Activated CD4-positive, alpha-beta T cell treated with anti-CD3 and anti-CD28 coated beads for 36 hours (primary cell): ENCODE measurements at regions of chr11 and their contacts with region 1.

Region 1: DNA sequence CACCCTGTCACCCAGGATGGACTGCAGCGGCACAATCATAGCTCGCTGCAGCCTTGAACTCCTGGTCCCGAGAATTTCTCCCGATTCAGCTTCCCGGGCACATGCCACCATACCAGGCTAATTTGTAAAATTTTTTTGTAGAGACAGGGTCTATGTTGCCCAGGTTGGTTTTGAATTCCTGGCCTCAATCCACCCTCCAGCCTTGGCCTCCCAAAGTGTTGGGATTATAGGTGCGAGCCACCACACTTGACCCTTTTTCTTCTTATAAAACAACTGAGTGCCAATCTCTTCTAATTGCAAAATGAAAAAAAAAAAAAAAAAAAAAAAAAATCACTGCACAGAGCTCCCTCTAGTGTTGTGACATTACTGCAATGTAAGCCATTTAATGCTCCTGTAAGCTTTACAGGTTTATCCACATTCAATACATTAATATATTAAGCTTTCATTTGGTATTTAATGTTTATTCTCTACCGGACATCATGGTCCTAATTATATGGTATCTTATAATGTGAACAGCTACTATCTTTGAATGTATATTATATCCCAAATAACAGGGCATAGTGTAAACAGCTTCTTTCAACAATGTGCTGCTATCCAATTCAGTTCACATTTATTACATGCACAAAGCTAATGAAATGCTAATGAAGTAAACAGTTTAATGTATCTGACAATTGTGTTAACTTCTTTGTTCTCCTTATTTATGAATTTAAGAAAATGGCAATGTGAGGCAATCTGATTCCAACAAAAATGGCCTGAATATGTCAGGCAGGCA is 44.6 kb downstream of the COPB1 start:
- DNase-seq: no peak
- ATAC-seq: peak; percentile 39
- H3K4me3 Mint-ChIP-seq: no peak overlapping the region
- H3K27ac Mint-ChIP-seq: no peak overlapping the region
- H3K4me1 Mint-ChIP-seq: no peaks in the 10 kb centered on the region
- H3K27me3 Mint-ChIP-seq: no peaks in the 10 kb centered on the region

Region 2: DNA sequence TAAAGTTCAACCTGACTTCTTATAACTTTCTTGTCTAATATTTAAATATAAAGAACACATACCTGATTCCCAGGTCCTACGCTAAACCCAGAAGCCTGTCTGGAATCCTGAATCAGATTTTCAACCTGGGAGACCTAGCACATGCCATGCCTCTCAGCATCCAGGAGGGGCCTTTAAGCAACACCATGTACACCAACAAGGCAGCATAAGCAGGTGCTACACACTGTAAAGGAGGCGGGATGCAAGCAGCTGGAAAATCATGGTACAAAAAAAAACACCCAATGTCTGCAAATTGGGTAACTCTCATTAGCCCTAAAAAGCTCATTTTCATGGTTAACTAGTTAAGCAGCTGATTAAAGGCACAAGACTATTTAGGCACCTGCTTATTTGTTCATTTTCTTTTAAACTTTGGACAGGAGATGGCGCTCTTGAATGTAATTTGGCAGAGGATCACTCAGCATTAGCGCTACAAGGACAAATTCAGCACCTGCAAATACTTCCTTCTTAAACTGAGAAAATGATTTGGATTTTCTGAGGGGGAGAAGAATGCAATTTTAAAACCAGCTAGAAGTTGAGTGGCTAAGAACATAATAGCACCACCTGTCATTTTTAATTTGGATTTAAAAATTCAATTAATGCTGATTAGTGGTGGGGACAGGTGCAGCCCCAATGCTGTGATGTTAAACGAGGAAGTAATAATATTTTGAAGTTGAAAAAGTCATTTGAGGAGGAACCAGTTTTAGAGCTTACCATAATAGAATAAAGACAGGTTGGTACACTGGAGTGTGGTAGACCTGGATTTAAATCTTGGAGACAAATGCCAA is 682.6 kb before region 1 on chr11:
- CTCF ChIA-PET with region 1: no interaction called
- POLR2A ChIA-PET with region 1: no interaction called
- intact Hi-C with region 1: loop called in 1 of 2 experiments (anchors 2 kb)
- DNase-seq: no peak
- ATAC-seq: peak; percentile 74
- H3K4me3 Mint-ChIP-seq: no peak overlapping the region
- H3K27ac Mint-ChIP-seq: no peak overlapping the region
- H3K4me1 Mint-ChIP-seq: no peaks in the 10 kb centered on the region
- H3K27me3 Mint-ChIP-seq: peaks cover 3% of the 10 kb centered on the region

Region 3: DNA sequence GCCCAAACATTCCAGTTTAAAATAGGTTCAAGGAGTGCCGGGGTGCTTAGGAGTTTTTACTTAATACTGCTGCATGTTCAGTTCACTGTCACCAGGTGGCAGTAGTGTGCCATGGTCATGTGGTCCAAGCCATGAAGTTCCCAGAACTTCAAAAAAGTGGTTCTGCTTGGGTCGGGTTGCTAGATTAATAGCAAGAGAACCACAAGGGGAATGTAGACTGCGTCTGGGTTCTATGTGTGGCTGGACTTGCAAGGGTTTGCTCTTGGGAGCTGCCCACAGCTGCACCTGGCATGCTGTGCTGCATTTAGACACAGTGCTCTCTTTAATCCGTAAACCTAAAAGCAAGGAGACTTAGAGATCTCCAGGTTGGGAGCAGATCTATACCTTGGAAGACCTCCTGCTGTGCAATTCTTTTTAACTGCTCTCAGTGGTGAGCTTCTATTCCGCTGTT is 499.1 kb before region 1 on chr11:
- CTCF ChIA-PET with region 1: no interaction called
- POLR2A ChIA-PET with region 1: no interaction called
- intact Hi-C with region 1: loop called in 1 of 2 experiments (anchors 10 kb)
- DNase-seq: peak; percentile 71
- ATAC-seq: peak; percentile 58
- H3K4me3 Mint-ChIP-seq: no peak overlapping the region
- H3K27ac Mint-ChIP-seq: no peak overlapping the region
- H3K4me1 Mint-ChIP-seq: no peaks in the 10 kb centered on the region
- H3K27me3 Mint-ChIP-seq: peaks cover 13% of the 10 kb centered on the region

Region 4: DNA sequence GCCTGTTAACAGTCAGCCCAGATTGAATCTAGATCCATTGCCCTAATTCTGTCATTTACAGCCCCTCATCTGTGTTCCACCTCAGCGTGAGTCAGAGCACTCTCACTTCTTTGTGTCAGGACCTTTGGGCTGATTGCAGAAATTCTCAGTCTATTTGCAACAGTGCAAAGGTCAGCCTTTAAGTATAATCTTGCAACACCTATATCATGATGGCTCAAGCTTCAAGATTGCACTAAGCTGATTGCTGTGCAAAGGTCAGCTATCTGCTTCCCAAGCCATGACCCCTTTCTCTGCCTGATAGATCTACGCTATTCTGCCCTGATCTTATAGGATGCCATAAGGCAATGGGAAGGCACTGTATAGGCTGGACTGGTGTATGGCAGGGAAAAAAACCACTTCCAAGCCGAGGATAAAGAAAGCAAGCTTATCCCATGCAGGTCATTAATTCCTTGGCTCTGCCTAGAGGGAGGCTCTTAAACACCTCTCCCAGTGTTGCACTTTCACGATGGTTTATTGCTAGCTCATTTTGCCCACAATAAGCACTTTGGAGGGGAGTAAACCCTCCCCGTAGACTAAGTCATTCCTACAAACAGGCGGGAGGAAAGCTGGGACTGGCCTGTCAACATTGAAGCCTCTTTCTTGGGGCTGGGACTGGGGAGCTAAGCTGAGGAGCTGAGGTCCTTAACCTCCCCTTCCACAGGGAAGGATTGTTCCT is 196.7 kb before region 1 on chr11:
- CTCF ChIA-PET with region 1: no interaction called
- POLR2A ChIA-PET with region 1: no interaction called
- intact Hi-C with region 1: no loop called
- DNase-seq: no peak
- ATAC-seq: peak; percentile 42
- H3K4me3 Mint-ChIP-seq: no peak overlapping the region
- H3K27ac Mint-ChIP-seq: no peak overlapping the region
- H3K4me1 Mint-ChIP-seq: no peaks in the 10 kb centered on the region
- H3K27me3 Mint-ChIP-seq: no peaks in the 10 kb centered on the region

Region 5: DNA sequence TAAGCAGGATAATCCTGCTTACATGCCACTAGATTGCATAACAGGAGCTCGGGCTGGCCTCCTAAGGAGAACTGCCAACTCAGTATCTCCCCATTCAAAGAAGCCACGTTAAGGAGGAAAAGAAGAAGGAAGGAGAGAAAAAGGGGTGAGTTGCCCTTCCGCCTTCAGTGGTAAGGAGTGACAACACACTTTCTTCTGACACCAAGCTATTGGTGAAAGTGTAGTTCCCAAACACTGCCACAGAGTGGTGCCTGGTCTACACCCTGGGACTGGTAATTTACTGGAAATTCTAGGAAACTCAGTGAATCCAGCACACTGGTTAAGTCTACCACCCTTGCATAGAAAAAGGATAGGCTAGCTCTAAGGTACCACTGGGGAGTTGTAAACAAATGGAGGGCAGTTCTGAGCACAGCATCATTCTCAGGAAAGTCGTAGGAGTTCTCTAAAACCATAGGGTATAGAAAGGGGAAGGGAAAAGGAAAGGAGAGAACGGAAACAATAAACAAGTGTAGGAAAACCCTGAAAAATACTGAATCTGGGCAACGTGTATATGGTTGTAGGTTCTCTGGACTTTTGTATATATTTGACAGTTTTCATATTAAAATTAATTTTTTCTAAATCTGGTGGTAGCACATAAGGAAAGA is 154.3 kb before region 1 on chr11:
- CTCF ChIA-PET with region 1: interaction called, 95 read pairs
- POLR2A ChIA-PET with region 1: no interaction called
- intact Hi-C with region 1: loop called (anchors 1 kb)
- DNase-seq: peak; percentile 66
- ATAC-seq: peak; percentile 97
- H3K4me3 Mint-ChIP-seq: no peak overlapping the region
- H3K27ac Mint-ChIP-seq: no peak overlapping the region
- H3K4me1 Mint-ChIP-seq: no peaks in the 10 kb centered on the region
- H3K27me3 Mint-ChIP-seq: no peaks in the 10 kb centered on the region

Region 6: GRCh38 chr11:14308114-14308896 is 146.7 kb before region 1 on chr11:
- CTCF ChIA-PET with region 1: interaction called, 95 read pairs
- POLR2A ChIA-PET with region 1: no interaction called
- intact Hi-C with region 1: no loop called
- DNase-seq: no peak
- ATAC-seq: peak; percentile 86
- H3K4me3 Mint-ChIP-seq: no peak overlapping the region
- H3K27ac Mint-ChIP-seq: no peak overlapping the region
- H3K4me1 Mint-ChIP-seq: peaks cover 10% of the 10 kb centered on the region
- H3K27me3 Mint-ChIP-seq: no peaks in the 10 kb centered on the region

Region 7: DNA sequence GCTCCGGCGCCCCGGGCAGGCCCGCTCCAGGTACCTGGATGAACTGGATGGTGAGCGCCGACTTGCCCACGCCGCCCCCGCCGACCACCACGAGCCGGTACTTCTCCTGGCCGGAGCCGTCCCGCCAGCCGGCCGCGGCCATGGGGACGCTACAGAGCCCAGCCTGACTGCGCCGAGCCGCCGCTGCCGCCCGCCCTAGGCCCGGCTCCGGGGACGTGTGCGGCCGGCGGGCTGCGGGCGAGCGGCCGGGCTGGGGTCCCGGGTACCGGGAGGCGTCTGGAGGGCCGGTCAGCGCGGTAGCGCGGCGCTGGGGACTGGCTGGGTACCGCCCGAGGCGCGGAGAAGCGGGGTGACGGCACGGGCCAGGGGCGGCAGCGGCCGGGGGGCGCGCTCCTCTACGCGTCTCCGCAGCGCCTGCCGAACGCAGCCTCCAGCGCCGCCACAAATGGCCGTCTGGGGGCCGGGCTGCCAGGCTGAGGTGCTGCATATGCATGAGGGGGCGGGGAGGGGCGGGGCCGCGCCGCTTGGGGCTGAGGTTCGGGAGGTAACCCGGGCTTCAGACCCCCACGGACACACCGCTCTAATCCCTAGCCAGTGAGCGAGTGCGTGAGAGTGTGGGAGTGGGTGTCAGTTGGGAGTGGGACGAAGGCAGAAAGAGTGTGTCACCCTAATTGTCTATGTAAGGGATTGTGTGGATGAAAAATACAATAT is 96.2 kb before region 1 on chr11 and contains the start of gene RRAS2:
- CTCF ChIA-PET with region 1: interaction called, 5 read pairs
- POLR2A ChIA-PET with region 1: no interaction called
- intact Hi-C with region 1: loop called in 1 of 2 experiments (anchors 5 kb)
- DNase-seq: peak; percentile 88
- ATAC-seq: peak; percentile 93
- H3K4me3 Mint-ChIP-seq: peak within 1 kb of the TSS; percentile 95
- H3K27ac Mint-ChIP-seq: peak within 1 kb of the TSS; percentile 89
- H3K4me1 Mint-ChIP-seq: peaks cover 26% of the 10 kb centered on the region
- H3K27me3 Mint-ChIP-seq: no peaks in the 10 kb centered on the region
- total RNA-seq, gene RRAS2: 35.0 to 48.0 TPM